ENCODE measurements at regions of chr1 and their contacts with region 1.

Region 1: DNA sequence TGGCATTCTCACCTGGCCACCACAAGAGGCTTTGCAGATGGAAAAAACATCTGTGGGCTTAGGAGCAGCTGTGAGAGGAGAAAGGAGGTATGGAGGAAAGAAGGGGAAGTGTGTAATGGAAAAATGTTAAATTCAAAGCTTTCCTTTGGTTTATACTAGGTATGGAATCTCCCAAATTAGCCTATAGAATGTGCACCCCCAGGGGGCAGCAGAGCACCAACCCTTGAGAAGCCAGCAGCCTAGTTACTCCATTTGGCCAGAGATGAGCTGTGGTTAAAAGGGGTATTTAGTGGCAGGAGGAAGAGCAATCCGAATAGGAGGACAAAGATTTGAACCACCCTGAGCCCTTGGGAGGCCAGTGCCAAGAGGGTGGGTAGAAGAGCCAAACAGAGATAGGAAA is 97.5 kb upstream of the CTTNBP2NL start:
- DNase-seq: no peak
- H3K4me3 ChIP-seq: no peak overlapping the region
- H3K27ac ChIP-seq: no peak overlapping the region
- H3K4me1 ChIP-seq: no peaks in the 10 kb centered on the region
- H3K27me3 ChIP-seq: no peaks in the 10 kb centered on the region
- CTCF ChIP-seq: peak; percentile 59 to 74 (median 67)
- EP300 ChIP-seq: no peak
- POLR2A ChIP-seq: no peak

Region 2: DNA sequence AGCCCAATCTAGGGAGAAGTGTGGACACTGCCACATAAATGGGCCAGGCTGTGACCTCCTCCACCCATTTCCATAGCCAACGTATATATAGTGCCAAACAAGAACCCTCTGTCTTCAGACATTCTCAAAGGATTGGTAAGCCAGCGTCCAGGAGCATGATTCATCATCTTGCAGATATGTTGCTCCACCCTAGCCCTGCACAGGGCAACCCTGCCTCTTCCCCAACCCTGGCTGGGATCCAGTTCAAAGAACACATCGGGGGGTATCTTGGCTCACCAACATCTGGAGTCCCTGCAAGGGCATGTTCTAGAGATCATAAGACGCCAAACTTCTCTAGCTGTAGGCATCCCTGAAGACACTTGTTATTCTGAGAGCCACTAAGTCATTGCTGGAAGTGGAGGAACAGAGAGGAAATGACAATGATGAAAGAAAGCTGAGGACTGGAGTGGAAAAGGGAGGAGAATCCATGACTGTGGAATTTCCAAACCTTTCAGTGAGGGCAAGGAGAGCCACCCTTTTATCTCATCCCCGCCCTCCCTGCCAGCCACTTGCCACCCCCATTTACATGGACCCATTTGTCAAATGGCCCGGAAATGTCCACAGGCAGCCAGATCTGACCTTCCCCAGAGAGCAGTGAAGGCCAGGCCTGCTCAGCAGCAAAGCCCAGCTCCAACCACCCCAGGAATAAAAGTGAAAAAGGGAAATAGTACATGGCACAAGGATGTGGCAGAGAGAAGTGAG is 46.6 kb before region 1 on chr1:
- intact Hi-C with region 1: no loop called
- DNase-seq: no peak
- H3K4me3 ChIP-seq: no peak overlapping the region
- H3K27ac ChIP-seq: no peak overlapping the region
- H3K4me1 ChIP-seq: peaks cover 5 to 13% (median 7%) of the 10 kb centered on the region in 4 donors
- H3K27me3 ChIP-seq: peaks cover 0 to 4% (median 0%) of the 10 kb centered on the region in 4 donors
- CTCF ChIP-seq: no peak
- EP300 ChIP-seq: no peak
- POLR2A ChIP-seq: no peak

Region 3: GRCh38 chr1:112337028-112337531 is 38.5 kb after region 1 on chr1:
- intact Hi-C with region 1: loop called (anchors 2 kb)
- DNase-seq: no peak
- H3K4me3 ChIP-seq: peak overlapping the region in 1 of 4 donors; percentile 9
- H3K27ac ChIP-seq: no peak overlapping the region
- H3K4me1 ChIP-seq: peaks cover 0 to 18% (median 0%) of the 10 kb centered on the region in 4 donors
- H3K27me3 ChIP-seq: no peaks in the 10 kb centered on the region
- CTCF ChIP-seq: peak; percentile 66 to 76 (median 71)
- EP300 ChIP-seq: no peak
- POLR2A ChIP-seq: no peak